Activated CD4-positive, alpha-beta T cell treated with anti-CD3 and anti-CD28 coated beads for 36 hours (primary cell): ENCODE measurements at regions of chr6 and their contacts with region 1.

Region 1: DNA sequence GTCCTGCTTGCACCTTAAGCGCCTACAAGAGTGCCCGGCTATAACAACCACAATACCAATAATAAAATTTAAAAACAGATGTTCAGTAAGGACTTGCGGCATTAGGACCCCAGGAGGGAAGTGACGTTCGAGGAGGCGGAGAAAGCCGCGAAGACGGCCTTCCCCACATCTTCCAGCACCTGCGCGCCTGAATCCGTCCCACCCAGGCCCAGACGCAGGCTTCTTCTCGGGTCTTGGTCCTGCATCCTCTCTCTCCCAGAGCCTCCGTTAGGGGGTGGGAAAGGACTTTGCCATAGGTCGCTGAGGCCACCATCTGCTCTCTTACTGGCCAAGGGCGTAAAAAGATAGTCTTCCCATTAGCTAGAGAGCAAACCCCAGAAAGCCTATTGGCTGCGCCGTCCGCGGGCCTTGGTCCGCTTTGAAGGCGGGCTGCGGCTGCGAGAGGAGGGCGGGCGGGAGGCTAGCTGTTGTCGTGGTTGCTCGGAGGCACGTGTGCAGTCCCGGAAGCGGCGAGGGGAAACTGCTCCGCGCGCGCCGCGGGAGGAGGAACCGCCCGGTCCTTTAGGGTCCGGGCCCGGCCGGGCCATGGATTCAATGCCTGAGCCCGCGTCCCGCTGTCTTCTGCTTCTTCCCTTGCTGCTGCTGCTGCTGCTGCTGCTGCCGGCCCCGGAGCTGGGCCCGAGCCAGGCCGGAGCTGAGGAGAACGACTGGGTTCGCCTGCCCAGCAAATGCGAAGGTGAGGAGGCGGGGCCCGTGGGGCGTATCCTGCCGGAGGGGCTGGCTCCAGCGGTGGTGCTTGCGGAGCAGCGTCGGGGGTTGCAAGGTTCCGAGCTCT is at the start of gene CNPY3:
- DNase-seq: peak; percentile 98
- ATAC-seq: peak; percentile 88
- H3K4me3 Mint-ChIP-seq: peak within 1 kb of the TSS; percentile 84
- H3K27ac Mint-ChIP-seq: peak within 1 kb of the TSS; percentile 93
- H3K4me1 Mint-ChIP-seq: peaks cover 40% of the 10 kb centered on the region
- H3K27me3 Mint-ChIP-seq: no peaks in the 10 kb centered on the region
- total RNA-seq, gene CNPY3: 33.0 to 34.3 TPM

Region 2: GRCh38 chr6:41920921-41921711 is 1008.1 kb before region 1 on chr6 and contains the starts of genes BYSL and MED20:
- CTCF ChIA-PET with region 1: no interaction called
- POLR2A ChIA-PET with region 1: no interaction called
- intact Hi-C with region 1: loop called in 1 of 2 experiments (anchors 1 kb)
- DNase-seq: peak; percentile 96
- ATAC-seq: peak; percentile 83
- H3K4me3 Mint-ChIP-seq: peak within 1 kb of the TSS; percentile 99
- H3K27ac Mint-ChIP-seq: peak within 1 kb of the TSS; percentile 98
- H3K4me1 Mint-ChIP-seq: peaks cover 49% of the 10 kb centered on the region
- H3K27me3 Mint-ChIP-seq: no peaks in the 10 kb centered on the region
- total RNA-seq, gene BYSL: 51.6 to 56.0 TPM
- total RNA-seq, gene MED20: 19.4 to 21.6 TPM

Region 3: DNA sequence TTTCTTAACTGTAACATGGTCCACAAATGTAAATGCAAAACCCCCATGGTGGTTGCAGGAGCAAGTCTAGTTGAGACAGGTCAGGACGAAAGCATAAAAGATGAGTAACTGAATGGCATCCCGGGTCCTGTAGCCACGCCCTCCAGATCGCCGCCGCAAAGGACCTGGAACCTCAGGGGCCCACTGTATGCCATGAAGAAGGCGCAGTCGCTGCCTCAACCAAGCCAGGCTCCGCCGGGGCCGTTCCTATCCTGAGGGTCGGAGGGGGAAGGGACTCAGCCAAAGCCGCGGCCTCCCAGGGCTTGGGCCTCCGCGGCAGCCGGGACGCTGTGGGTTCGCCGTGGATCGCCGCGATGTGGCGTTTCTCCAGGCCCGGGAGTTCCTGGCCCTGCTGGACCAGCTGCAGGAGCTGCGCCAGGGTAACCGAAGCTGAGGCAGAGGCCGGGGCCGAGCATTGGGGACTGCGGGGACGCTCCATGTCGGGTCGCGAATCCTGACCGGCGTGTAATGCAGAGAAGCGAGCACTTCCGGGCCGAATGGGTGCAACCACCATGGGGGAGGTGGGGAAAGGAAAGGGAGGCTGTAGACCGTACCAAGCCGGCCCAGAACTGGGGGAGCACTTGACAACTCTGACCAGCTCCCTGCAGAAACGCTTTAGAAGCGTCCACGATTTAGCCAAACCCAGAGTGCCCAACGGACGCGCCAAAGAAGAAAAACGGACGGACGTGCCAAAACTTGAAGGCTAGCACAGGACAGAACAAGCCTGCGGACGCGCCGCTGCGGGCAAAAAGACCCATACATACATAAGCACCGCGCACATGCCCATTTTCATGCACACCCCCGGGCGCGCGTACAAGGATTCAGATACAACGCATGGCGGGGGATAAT is 38.6 kb before region 1 on chr6:
- CTCF ChIA-PET with region 1: no interaction called
- POLR2A ChIA-PET with region 1: interaction called, 4 read pairs
- intact Hi-C with region 1: loop called in 1 of 2 experiments (anchors 1 kb)
- DNase-seq: peak; percentile 95
- ATAC-seq: peak; percentile 89
- H3K4me3 Mint-ChIP-seq: peak overlapping the region; percentile 90
- H3K27ac Mint-ChIP-seq: peak overlapping the region; percentile 98
- H3K4me1 Mint-ChIP-seq: peaks cover 31% of the 10 kb centered on the region
- H3K27me3 Mint-ChIP-seq: no peaks in the 10 kb centered on the region

Region 4: DNA sequence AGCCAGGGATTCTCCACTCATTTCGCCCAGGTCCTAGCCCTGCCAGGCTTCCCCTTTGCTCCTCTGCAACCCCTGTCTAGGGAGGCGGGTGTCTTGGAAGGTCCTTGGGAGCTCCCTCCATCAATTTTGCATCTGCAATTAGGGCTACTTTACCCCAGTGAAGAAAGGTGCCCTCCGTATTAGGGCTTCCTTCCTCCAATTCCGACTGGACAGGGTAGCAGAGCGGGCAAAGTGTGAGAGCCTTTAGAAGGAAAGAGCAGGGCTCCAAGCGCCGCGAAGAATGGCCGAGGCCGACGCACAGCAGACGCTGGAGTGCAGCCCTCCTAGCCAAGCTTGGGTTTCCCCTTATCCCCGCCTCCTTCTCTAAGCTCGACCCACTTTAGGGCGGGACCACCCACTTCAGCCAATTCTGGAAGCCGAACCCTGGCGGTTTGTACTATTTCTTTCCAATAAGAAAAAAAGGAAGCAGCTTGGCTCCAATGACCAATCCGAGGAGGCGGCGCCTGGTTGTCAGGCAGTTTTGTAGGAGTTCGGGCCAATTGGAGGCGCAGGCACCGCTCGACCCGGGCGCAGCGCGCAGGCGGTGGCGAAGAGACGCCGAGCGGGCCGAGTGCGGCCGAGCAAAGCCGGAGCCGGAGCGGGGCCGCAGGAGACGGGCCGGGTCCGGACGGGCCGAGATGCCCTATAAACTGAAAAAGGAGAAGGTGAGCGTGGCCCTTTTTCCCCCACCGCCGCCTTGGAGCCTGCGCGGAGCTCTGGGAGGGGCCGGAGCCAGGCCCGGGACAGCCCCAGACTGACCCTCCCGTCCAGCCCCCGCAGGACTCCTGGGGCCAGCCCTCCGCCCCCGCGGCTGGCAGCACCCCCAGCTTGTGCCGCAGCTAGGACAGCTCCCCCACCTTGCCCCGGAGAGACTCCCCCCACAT is 55.1 kb after region 1 on chr6 and contains the start of gene PPP2R5D:
- CTCF ChIA-PET with region 1: interaction called, 4 read pairs
- POLR2A ChIA-PET with region 1: interaction called, 15 read pairs
- intact Hi-C with region 1: loop called (anchors 1 kb)
- DNase-seq: peak; percentile 98
- ATAC-seq: peak; percentile 92
- H3K4me3 Mint-ChIP-seq: peak within 1 kb of the TSS; percentile 79
- H3K27ac Mint-ChIP-seq: peak within 1 kb of the TSS; percentile 82
- H3K4me1 Mint-ChIP-seq: peaks cover 52% of the 10 kb centered on the region
- H3K27me3 Mint-ChIP-seq: no peaks in the 10 kb centered on the region
- total RNA-seq, gene PPP2R5D: 51.0 to 57.3 TPM

Region 5: GRCh38 chr6:43059168-43060033 is 130.2 kb after region 1 on chr6 and contains the starts of genes KLC4 and MRPL2:
- CTCF ChIA-PET with region 1: no interaction called
- POLR2A ChIA-PET with region 1: interaction called, 3 read pairs
- intact Hi-C with region 1: loop called (anchors 1 kb)
- DNase-seq: peak; percentile 99
- ATAC-seq: peak; percentile 98
- H3K4me3 Mint-ChIP-seq: peak within 1 kb of the TSS; percentile 85
- H3K27ac Mint-ChIP-seq: peak within 1 kb of the TSS; percentile 94
- H3K4me1 Mint-ChIP-seq: peaks cover 27% of the 10 kb centered on the region
- H3K27me3 Mint-ChIP-seq: no peaks in the 10 kb centered on the region
- total RNA-seq, gene KLC4: 10.0 to 10.1 TPM
- total RNA-seq, gene MRPL2: 93.9 to 110 TPM

Region 6: DNA sequence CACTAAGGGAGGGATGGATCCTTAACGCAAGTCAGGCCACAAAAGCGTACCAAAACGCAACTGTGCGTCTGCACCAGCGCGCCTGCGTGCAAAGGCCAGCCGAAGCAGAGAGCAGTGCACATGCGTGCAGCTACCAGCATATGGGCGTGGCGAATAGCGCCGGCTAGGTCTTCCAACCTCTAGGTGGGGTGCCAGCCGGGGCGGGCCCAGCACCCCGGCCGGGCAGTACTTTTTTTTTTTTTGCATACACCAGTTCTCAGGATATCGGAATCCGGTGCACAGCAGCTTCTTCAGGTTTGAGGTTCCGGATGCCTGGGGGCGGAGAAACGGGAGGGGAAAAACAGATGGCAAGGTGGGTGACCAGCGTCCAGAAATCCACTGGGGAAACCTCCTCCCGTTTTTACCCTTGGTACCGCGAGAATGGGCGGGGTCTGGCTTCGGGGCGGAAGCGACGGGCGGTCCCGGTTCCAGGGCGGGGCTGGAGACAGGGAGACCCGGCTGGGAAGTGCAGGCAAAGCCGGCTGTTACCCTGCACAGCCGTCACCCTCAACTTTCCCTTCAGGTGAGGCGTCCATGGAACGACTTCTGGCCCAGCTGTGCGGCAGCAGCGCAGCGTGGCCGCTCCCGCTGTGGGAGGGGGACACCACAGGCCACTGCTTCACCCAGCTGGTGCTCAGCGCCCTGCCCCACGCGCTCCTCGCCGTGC is 498.4 kb after region 1 on chr6 and contains the start of gene ABCC10:
- CTCF ChIA-PET with region 1: no interaction called
- POLR2A ChIA-PET with region 1: no interaction called
- intact Hi-C with region 1: loop called in 1 of 2 experiments (anchors 1 kb)
- DNase-seq: peak; percentile 97
- ATAC-seq: peak; percentile 97
- H3K4me3 Mint-ChIP-seq: peak within 1 kb of the TSS; percentile 94
- H3K27ac Mint-ChIP-seq: peak within 1 kb of the TSS; percentile 97
- H3K4me1 Mint-ChIP-seq: peaks cover 21% of the 10 kb centered on the region
- H3K27me3 Mint-ChIP-seq: no peaks in the 10 kb centered on the region
- total RNA-seq, gene ABCC10: 27.8 to 29.0 TPM

Region 7: GRCh38 chr6:43575772-43576551 is 646.8 kb after region 1 on chr6 and contains the starts of genes POLH and XPO5:
- CTCF ChIA-PET with region 1: no interaction called
- POLR2A ChIA-PET with region 1: no interaction called
- intact Hi-C with region 1: loop called in 1 of 2 experiments (anchors 1 kb)
- DNase-seq: peak; percentile 95
- ATAC-seq: peak; percentile 91
- H3K4me3 Mint-ChIP-seq: peak within 1 kb of the TSS; percentile 90
- H3K27ac Mint-ChIP-seq: peak within 1 kb of the TSS; percentile 86
- H3K4me1 Mint-ChIP-seq: peaks cover 44% of the 10 kb centered on the region
- H3K27me3 Mint-ChIP-seq: no peaks in the 10 kb centered on the region
- total RNA-seq, gene POLH: 35.2 to 37.9 TPM
- total RNA-seq, gene XPO5: 108 to 109 TPM